Activated naive CD8-positive, alpha-beta T cell treated with anti-CD3 and anti-CD28 coated beads, Interleukin-2, amount 10 ng/mL, durations not matched to agents 7 days and 5 days (primary cell): ENCODE measurements at regions of chr19 and their contacts with region 1.

Region 1: GRCh38 chr19:6801485-6802086 is 29.1 kb downstream of the VAV1 start:
- DNase-seq: peak; percentile 76
- ATAC-seq: peak; percentile 79
- H3K4me3 Mint-ChIP-seq: peak overlapping the region; percentile 86
- H3K27ac Mint-ChIP-seq: peak overlapping the region; percentile 93
- H3K4me1 Mint-ChIP-seq: peaks cover 50% of the 10 kb centered on the region
- H3K27me3 Mint-ChIP-seq: no peaks in the 10 kb centered on the region

Region 2: GRCh38 chr19:6790194-6791128 is 11.1 kb before region 1 on chr19:
- POLR2A ChIA-PET with region 1: interaction called, 10 read pairs
- DNase-seq: no peak
- ATAC-seq: no peak
- H3K4me3 Mint-ChIP-seq: no peak overlapping the region
- H3K27ac Mint-ChIP-seq: no peak overlapping the region
- H3K4me1 Mint-ChIP-seq: peaks cover 48% of the 10 kb centered on the region
- H3K27me3 Mint-ChIP-seq: no peaks in the 10 kb centered on the region